Heart right ventricle (tissue), 16 donors: ENCODE measurements at regions of chr11 and their contacts with region 1.

Region 1: DNA sequence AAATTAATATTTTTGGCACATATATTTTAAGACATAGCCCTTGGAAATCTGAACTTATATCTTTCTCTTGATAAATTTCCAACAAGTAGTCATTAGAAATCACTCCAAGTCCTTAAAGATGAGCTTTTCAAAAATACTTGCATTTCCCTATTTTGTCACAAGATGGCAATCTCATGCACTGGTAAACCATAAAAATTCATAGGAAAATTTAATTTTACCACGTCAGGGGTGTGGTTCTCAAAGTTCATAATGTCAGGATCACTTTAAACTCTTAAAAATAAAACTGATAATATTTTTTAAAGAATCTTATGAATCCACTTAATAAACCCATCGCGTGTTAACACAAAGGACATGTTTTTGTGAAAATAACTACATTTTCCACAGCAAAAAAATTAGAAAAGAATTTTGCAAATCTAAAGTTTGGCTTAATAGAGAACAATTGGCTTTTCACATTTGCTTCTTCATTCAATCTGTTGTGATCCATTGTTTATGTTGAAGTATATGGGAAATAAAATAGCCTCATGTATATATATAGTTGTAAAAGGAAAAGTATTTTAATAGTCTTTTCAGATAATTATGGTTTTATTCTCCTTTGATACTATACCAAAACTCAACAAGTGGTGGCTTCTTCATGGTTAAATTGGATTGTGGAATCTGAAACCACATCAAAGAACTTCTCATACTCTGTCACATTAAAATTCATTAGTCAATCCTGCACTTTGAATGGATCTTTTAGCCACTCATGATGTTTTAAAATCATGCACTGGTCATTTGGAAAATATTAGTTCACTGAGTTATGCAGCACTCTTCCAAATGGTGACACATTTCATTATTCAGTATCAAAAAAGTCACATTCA is 169.1 kb downstream of the CADM1 start:
- DNase-seq: no peak
- ATAC-seq: no peak
- H3K4me3 ChIP-seq: no peak overlapping the region
- H3K27ac ChIP-seq: no peak overlapping the region
- H3K4me1 ChIP-seq: peaks cover 0 to 6% (median 0%) of the 10 kb centered on the region in 9 donors
- H3K27me3 ChIP-seq: no peaks in the 10 kb centered on the region
- CTCF ChIP-seq: peak; percentile 52 to 81 (median 76)

Region 2: GRCh38 chr11:115222218-115222862 is 112.8 kb before region 1 on chr11:
- intact Hi-C with region 1: no loop called
- DNase-seq: no peak
- ATAC-seq: no peak
- H3K4me3 ChIP-seq: no peak overlapping the region
- H3K27ac ChIP-seq: peak overlapping the region in 1 of 10 donors; percentile 32
- H3K4me1 ChIP-seq: peaks cover 0 to 35% (median 10%) of the 10 kb centered on the region in 9 donors
- H3K27me3 ChIP-seq: no peaks in the 10 kb centered on the region
- CTCF ChIP-seq: no peak

Region 3: GRCh38 chr11:115379528-115379927 is 44.4 kb after region 1 on chr11:
- intact Hi-C with region 1: no loop called
- DNase-seq: no peak
- ATAC-seq: no peak
- H3K4me3 ChIP-seq: no peak overlapping the region
- H3K27ac ChIP-seq: no peak overlapping the region
- H3K4me1 ChIP-seq: peaks cover 0 to 6% (median 0%) of the 10 kb centered on the region in 9 donors
- H3K27me3 ChIP-seq: no peaks in the 10 kb centered on the region
- CTCF ChIP-seq: no peak

Region 4: GRCh38 chr11:115672999-115673411 is 337.8 kb after region 1 on chr11:
- intact Hi-C with region 1: loop called in 3 of 10 experiments (anchors 10 kb)
- DNase-seq: peak; percentile 26 to 38
- ATAC-seq: peak; percentile 64 to 87 (median 78)
- H3K4me3 ChIP-seq: no peak overlapping the region
- H3K27ac ChIP-seq: peak overlapping the region in 5 of 10 donors; percentile 12 to 57 (median 40)
- H3K4me1 ChIP-seq: peaks cover 0 to 14% (median 4%) of the 10 kb centered on the region in 9 donors
- H3K27me3 ChIP-seq: peaks cover 0 to 7% (median 0%) of the 10 kb centered on the region in 7 donors
- CTCF ChIP-seq: no peak

Region 5: GRCh38 chr11:115792903-115793302 is 457.7 kb after region 1 on chr11:
- intact Hi-C with region 1: no loop called
- DNase-seq: no peak
- ATAC-seq: peak in 4 of 8 donors; percentile 37 to 69 (median 56)
- H3K4me3 ChIP-seq: no peak overlapping the region
- H3K27ac ChIP-seq: no peak overlapping the region
- H3K4me1 ChIP-seq: peaks cover 0 to 3% (median 0%) of the 10 kb centered on the region in 9 donors
- H3K27me3 ChIP-seq: peaks cover 0 to 6% (median 0%) of the 10 kb centered on the region in 7 donors
- CTCF ChIP-seq: no peak

Region 6: GRCh38 chr11:115974703-115975102 is 639.5 kb after region 1 on chr11:
- intact Hi-C with region 1: loop called in 1 of 10 experiments (anchors 5 kb)
- DNase-seq: no peak
- ATAC-seq: no peak
- H3K4me3 ChIP-seq: no peak overlapping the region
- H3K27ac ChIP-seq: no peak overlapping the region
- H3K4me1 ChIP-seq: peaks cover 0 to 5% (median 0%) of the 10 kb centered on the region in 9 donors
- H3K27me3 ChIP-seq: peaks cover 0 to 37% (median 0%) of the 10 kb centered on the region in 7 donors
- CTCF ChIP-seq: no peak

Region 7: DNA sequence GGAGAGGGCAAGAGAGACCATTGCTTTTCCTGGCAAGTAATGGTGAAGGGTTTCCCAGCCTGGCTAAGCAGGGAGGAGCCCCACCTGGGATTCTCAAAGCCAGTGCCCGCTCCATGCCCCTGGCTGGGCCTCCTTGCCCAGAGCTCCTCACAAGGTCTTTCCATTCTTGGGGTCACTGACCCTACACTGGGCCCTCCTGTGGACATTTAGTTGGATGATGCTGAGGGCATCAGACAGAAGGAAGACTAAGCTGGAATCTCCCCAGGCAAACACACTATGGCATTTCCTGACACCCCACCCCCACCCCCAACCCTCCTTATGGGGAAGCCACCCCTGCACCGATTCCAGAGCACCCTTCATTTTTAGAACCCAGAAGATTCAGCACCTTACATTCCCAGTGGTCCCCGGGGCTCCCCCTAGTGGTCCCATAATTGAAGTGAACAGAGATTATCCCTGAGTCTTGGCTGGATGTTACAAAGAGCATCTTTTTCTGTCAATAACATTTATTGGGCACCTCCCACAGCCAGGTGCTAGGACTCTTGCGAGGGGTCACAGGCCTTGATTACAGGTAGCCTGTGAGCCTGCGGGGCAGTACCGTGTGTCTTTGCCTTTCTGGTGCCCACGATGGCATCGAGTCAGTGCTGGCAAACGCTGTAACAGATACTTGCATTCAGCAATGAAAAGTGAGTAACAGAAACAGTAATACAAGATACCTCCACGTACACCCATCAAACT is 889.2 kb after region 1 on chr11:
- intact Hi-C with region 1: loop called in 1 of 10 experiments (anchors 10 kb)
- DNase-seq: peak in 1 of 2 donors; percentile 46
- ATAC-seq: peak in 3 of 8 donors; percentile 24 to 61 (median 51)
- H3K4me3 ChIP-seq: no peak overlapping the region
- H3K27ac ChIP-seq: no peak overlapping the region
- H3K4me1 ChIP-seq: peaks cover 0 to 10% (median 0%) of the 10 kb centered on the region in 9 donors
- H3K27me3 ChIP-seq: peaks cover 0 to 20% (median 4%) of the 10 kb centered on the region in 7 donors
- CTCF ChIP-seq: peak; percentile 41 to 77 (median 67)